AG04449 (cell line): ENCODE measurements at regions of chrX and their contacts with region 1.

Region 1: DNA sequence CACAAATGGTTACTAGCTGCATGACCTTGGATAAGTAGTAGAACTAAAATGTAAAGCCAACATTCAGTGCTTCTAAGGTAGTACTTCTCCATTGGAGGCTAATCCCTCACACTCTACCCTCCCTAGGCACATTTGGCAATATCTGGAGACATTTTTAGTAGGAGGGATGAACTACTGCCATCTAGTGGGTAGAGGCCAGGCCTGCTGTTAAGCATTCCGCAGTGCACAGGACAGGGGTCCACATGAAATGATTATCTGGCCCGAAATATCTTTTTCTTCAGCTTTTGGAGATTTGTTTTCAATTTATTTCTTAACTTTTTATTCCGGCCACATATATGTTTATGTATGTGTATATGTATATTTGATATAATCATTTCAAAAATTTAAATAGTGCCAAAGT is 36.0 kb upstream of the SPANXC start:
- DNase-seq: no peak
- H3K4me3 ChIP-seq: no peak overlapping the region
- CTCF ChIP-seq: peak; percentile 38

Region 2: DNA sequence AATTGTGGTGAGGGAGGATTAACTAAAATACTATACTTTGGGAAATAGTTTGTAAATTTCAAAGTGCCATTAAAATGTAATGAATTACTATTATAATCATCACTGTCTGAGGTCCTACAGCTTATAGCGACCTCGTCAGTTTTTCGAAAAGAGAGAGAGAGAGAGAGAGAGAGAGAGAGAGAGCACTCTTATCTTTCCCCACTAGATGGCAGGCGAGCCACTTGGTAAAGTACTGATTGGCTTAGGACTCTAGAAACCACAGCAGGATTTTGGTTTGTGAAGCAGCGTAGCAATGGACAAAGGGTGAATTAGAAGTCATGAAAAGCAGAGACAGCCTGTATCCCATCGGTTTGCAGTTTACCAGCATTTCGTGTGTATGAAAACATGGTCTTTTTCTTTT is 516.2 kb before region 1 on chrX:
- CTCF ChIA-PET with region 1: interaction called, 12 read pairs
- POLR2A ChIA-PET with region 1: no interaction called
- DNase-seq: no peak
- H3K4me3 ChIP-seq: no peak overlapping the region
- CTCF ChIP-seq: peak; percentile 85

Region 3: GRCh38 chrX:140918407-140919038 is 359.8 kb before region 1 on chrX:
- CTCF ChIA-PET with region 1: interaction called, 22 read pairs
- POLR2A ChIA-PET with region 1: no interaction called
- DNase-seq: no peak
- H3K4me3 ChIP-seq: no peak overlapping the region
- CTCF ChIP-seq: peak; percentile 42